ENCODE measurements at regions of chr3 and their contacts with region 1.

Region 1: DNA sequence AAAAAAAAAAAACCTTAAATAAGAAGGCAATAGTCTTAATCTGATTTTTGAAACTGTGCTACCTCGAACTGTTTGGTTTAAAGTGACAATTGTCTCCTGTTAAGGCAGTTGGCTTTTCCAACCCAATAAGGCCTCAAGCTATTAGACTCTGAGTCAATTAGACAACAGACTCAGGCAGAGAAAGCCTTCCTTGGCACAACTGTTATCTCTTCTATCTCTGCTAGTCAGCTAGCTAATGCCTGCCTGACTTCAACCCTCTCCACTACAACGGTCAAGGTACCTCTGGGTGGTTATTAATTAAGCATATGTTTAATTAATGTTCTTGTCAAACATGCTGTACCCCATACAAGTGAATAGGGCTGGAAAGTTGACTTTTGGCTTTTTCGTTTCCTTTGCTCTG is 110.2 kb upstream of the NLGN1 start:
- DNase-seq: no peak
- ATAC-seq: no peak
- H3K4me3 ChIP-seq: no peak overlapping the region
- H3K27ac ChIP-seq: no peak overlapping the region
- H3K4me1 ChIP-seq: no peaks in the 10 kb centered on the region
- H3K27me3 ChIP-seq: no peaks in the 10 kb centered on the region
- CTCF ChIP-seq: no peak
- POLR2A ChIP-seq: no peak

Region 2: DNA sequence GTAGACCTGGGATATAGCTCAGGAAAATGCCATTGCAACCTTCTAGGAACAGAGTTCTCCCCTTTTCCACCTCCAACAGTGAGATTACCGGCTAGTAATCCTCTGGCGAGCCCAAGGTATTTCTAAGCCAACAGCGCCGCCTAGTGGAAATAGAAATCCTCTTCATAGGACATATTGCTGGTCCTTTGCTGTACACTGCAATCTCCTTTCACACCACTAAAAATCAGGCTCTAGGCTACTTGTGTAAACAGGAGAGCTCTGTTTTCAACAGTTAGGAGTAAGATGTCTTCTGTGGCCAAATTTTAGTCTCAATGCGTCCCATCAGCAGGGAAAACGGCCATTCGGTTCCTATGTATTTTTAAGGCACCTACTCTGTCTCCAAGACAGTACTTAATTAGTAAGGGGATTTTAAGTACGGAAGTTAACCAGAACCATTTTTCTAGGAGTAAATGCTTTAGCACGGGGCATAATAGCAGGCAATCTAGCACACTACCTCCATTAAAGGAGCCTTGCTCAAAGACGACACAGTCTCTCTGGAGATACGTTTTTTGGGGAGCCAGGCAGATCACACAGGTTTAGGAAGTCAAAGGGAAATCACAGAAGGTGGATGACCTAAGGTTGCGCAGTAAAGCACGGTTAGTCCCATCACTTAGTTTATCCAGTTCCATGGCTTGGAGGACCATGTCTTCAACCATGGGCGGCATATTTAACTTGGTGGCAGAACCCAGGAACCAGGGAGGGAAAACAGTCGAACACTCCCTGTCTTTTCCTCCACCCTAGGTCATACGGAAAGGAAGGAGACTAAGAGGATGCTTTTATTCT is 620.3 kb before region 1 on chr3:
- intact Hi-C with region 1: no loop called
- DNase-seq: peak in 4 of 5 donors; percentile 65 to 79 (median 73)
- ATAC-seq: peak; percentile 88 to 97 (median 96)
- H3K4me3 ChIP-seq: no peak overlapping the region
- H3K27ac ChIP-seq: no peak overlapping the region
- H3K4me1 ChIP-seq: peaks cover 0 to 28% (median 20%) of the 10 kb centered on the region in 12 donors
- H3K27me3 ChIP-seq: no peaks in the 10 kb centered on the region
- CTCF ChIP-seq: peak; percentile 73 to 89 (median 84)
- POLR2A ChIP-seq: no peak

Region 3: DNA sequence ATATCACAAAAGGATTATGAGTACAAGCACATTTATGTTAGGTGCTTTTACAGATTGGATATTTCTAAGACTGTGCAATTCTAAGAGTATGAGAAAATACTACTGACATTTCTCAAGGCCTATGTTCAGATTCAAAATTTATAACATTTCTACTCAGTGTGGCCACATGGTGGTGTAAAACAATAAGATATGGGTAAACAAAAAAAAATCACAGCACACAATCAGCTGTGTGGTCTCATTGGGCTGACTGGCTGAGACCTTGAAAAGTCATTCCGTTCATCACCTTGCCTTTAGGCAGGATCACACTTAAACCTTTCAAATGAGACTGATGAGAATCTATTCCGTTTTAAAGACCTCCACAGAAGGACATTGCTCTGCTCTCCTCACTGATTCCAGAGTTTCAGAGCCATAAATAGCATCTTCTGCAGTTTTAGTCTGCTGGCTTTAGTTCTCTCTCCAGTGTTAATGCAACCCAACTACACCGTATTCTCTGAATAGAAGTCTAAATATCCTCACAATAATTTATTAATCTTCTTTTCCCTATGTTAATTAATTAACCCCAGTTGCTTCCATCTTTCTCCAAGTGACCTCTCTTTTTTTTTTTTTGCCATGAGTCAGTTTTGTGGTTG is 304.5 kb before region 1 on chr3:
- intact Hi-C with region 1: loop called in 1 of 10 experiments (anchors 5 kb)
- DNase-seq: no peak
- ATAC-seq: peak; percentile 42 to 70 (median 60)
- H3K4me3 ChIP-seq: peak overlapping the region in 4 of 12 donors; percentile 11 to 28 (median 20)
- H3K27ac ChIP-seq: peak overlapping the region in 2 of 12 donors; percentile 13 to 65
- H3K4me1 ChIP-seq: peaks cover 0 to 9% (median 0%) of the 10 kb centered on the region in 12 donors
- H3K27me3 ChIP-seq: no peaks in the 10 kb centered on the region
- CTCF ChIP-seq: peak in 10 of 12 donors; percentile 14 to 47 (median 30)
- POLR2A ChIP-seq: no peak